ENCODE measurements at regions of chr2 and their contacts with region 1.

Region 1: DNA sequence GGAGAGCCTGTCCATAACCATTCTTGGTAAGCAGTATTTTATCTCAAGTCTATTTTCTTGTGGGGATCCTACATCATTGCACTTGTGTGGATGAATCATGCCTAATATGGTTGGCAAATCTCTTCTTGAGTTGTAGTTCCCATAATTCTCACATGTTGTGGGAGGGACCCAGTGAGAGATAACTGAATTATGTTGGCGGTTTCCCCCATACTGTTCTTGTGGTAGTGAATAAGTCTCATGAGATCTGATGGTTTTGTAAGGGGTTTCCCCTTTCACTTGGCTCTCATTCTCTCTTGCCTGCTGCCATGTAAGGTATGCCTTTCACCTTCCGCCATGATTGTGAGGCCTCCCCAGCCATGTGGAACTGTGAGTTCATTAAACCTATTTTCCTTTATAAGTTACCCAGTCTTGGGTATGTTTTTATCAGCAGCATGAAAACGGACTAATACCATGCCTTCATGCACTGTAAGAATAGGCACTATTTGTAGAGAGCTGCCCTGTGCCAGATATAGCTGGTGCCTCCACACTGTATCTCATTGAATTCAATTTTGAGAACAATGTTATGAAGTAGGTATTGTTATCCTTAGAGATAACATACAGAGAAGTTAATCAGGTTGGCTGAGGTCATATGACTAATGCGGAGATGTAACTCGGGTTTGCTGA is 148.3 kb downstream of the PLCL1 start:
- DNase-seq: no peak

Region 2: GRCh38 chr2:197883354-197884032 is 69.2 kb before region 1 on chr2:
- intact Hi-C with region 1: loop called (anchors 5 kb)
- DNase-seq: no peak